Upper lobe of right lung (tissue), 1 donor: ENCODE measurements at regions of chr18 and their contacts with region 1.

Region 1: DNA sequence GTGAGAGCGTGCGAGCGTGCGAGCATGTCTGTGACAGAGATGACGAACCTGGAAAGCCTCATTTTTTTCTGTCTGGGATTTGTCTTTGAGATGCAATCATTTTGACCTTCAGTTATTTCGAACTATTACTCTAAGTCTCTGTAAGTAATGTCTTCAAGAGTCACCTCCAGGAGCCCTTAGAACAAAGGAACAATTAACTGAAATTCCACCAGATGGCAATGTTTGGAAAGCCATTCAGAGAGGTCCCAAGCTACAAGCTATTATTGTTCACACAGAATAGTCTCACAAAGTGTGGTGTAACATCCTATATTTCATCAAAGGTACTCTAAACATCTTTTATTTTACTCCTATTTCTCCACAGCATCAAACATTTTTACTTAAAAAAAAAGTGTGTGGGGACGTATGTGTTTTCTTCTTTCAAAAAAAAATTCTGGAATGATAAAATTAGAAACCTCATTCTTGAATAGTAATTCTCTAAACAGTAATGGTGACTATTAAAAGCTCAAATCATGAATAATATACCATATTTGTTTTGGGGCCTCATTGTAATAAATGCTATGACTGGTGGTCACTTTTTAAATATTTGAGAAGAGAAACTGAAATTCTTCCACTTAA is 35.1 kb upstream of the MAPRE2 start:
- DNase-seq: no peak
- ATAC-seq: peak; percentile 93
- H3K4me3 ChIP-seq: no peak overlapping the region
- H3K27ac ChIP-seq: no peak overlapping the region
- H3K4me1 ChIP-seq: no peaks in the 10 kb centered on the region
- H3K27me3 ChIP-seq: no peaks in the 10 kb centered on the region
- CTCF ChIP-seq: peak; percentile 72

Region 2: DNA sequence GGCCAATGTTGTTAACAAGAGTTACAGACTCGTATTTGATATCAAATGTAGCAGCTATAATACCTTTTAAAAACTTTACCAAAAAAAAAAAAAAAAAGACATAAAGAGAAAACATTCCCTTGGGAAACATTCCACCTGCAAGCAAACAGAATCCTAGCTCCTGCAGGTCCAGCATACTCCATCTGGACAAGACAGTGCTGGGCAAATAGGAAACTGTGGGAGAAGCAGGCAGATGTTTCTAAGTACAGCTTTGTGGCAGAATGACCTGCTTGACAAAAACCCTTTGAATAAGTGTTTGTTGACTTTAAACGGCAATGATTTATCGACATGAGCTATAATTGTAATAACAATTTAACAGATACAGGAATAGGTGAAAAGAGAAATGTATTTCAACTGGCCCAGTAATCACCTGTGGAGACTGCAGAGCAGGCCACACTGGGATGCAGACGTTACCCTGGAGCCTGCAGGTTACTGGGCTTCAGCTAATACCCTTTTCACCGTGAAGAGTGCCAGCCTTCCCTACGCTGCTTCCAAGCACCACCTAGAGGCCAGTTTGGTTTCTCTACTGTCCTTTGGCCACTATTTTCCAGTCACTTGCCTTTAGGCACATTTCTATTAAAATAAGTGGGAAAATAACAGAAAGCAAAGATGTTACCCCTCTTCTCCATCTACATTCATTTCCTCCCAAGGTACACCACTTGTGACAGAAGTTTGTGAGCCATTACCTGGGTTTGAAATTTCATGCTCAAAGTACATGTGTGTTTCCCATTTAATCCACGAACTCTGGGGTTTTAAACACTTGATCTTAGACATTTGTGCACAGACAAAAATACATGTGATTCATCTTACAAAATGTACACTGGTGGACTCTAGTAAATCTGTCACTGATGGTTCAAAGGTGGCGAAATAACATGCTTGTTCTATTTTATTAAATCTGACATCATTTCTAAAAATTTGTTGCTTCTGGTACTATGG is 137.8 kb after region 1 on chr18:
- intact Hi-C with region 1: loop called (anchors 5 kb)
- DNase-seq: no peak
- ATAC-seq: peak; percentile 97
- H3K4me3 ChIP-seq: no peak overlapping the region
- H3K27ac ChIP-seq: no peak overlapping the region
- H3K4me1 ChIP-seq: no peaks in the 10 kb centered on the region
- H3K27me3 ChIP-seq: no peaks in the 10 kb centered on the region
- CTCF ChIP-seq: peak; percentile 75